ENCODE measurements at regions of chr14 and their contacts with region 1.

Region 1: GRCh38 chr14:80941241-80942182 is at the start of gene CEP128:
- DNase-seq: peak; percentile 30 to 82 (median 61)
- ATAC-seq: peak; percentile 93
- H3K4me3 ChIP-seq: peak within 1 kb of the TSS; percentile 78
- H3K4me3 Mint-ChIP-seq: peak within 1 kb of the TSS; percentile 84 to 93 (median 89)
- H3K27ac ChIP-seq: peak within 1 kb of the TSS; percentile 44
- H3K27ac Mint-ChIP-seq: peak within 1 kb of the TSS; percentile 52 to 89 (median 78)
- H3K4me1 ChIP-seq: peaks cover 10 to 11% of the 10 kb centered on the region in 2 donors
- H3K4me1 Mint-ChIP-seq: peaks cover 18 to 33% (median 20%) of the 10 kb centered on the region in 7 donors
- H3K27me3 ChIP-seq: no peaks in the 10 kb centered on the region
- H3K27me3 Mint-ChIP-seq: peaks cover 0 to 6% (median 4%) of the 10 kb centered on the region in 5 donors
- total RNA-seq, gene CEP128: 7.7 to 22.8 (median 10.1) TPM

Region 2: DNA sequence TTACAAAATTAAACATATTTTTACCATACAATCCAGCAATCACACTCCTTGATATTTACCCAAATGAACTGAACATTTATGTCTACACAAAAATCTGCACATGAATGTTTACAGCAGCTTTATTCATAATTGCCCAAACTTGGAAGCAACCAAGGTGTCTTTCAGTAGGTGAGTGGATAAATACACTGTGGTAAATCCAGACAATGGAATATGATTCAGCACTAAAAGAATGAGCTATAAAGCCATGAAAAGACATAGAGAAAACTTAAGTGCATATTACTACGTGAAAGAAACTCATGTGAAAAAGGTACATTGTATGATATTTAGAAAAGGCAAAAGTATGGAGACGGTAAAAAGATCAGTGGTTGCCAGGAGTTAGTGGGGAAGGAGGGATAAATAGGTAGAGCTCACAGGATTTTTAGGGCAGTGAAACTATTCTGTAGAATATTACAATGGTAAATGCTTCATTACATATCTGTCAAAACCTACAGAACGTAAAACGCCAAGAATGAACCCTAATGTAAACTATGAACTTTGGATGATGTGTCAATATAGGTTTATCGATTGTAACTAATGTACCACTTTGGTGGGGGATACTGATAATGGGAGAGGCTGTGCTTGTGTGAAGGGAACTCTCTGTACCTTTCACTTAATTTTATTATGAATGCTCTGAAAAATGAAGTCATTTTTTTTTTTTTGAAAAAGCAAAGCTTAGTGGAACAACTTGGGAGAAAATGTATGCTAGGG is 295.7 kb before region 1 on chr14:
- CTCF ChIA-PET with region 1: no interaction called
- POLR2A ChIA-PET with region 1: no interaction called
- intact Hi-C with region 1: no loop called
- DNase-seq: no peak
- ATAC-seq: no peak
- H3K4me3 ChIP-seq: no peak overlapping the region
- H3K4me3 Mint-ChIP-seq: no peak overlapping the region
- H3K27ac ChIP-seq: no peak overlapping the region
- H3K27ac Mint-ChIP-seq: no peak overlapping the region
- H3K4me1 ChIP-seq: no peaks in the 10 kb centered on the region
- H3K4me1 Mint-ChIP-seq: no peaks in the 10 kb centered on the region
- H3K27me3 ChIP-seq: no peaks in the 10 kb centered on the region
- H3K27me3 Mint-ChIP-seq: no peaks in the 10 kb centered on the region

Region 3: GRCh38 chr14:80930836-80931389 is 10.6 kb before region 1 on chr14:
- CTCF ChIA-PET with region 1: interaction called, 3 read pairs
- POLR2A ChIA-PET with region 1: no interaction called
- intact Hi-C with region 1: loop called in 1 of 2 experiments (anchors 1 kb)
- DNase-seq: peak in 7 of 9 donors; percentile 25 to 73 (median 57)
- ATAC-seq: peak; percentile 87
- H3K4me3 ChIP-seq: no peak overlapping the region
- H3K4me3 Mint-ChIP-seq: peak overlapping the region in 9 of 10 donors; percentile 2 to 84 (median 43)
- H3K27ac ChIP-seq: no peak overlapping the region
- H3K27ac Mint-ChIP-seq: peak overlapping the region in 8 of 9 donors; percentile 26 to 93 (median 60)
- H3K4me1 ChIP-seq: peaks cover 6 to 25% of the 10 kb centered on the region in 2 donors
- H3K4me1 Mint-ChIP-seq: peaks cover 10 to 63% (median 18%) of the 10 kb centered on the region in 7 donors
- H3K27me3 ChIP-seq: no peaks in the 10 kb centered on the region
- H3K27me3 Mint-ChIP-seq: peaks cover 0 to 6% (median 0%) of the 10 kb centered on the region in 5 donors